T-cell (primary cell): ENCODE measurements at regions of chr11 and their contacts with region 1.

Region 1: DNA sequence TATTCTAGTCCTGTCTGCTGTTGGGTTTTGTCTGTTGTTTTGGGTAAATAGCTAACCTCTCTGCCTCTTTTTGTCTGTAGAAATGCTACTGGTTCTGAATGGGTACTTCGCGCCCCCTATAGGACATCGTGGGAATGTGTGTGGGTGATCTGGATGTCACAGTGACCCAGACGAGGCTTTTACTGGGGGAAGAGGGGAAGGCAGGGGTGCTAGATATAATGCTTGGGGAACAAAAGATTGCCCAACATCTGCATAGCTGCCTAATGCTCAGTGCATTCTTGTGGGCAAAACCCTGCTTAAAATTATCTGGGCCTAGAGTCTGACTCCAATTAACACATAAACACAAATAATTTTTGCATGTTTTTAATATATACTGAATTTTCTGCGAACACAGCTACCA is 57.7 kb downstream of the BMAL1 start:
- DNase-seq: peak; percentile 41 to 84 (median 63)
- ATAC-seq: peak; percentile 60 to 69 (median 66)
- H3K4me3 ChIP-seq: no peak overlapping the region
- H3K4me3 Mint-ChIP-seq: no peak overlapping the region
- H3K27ac ChIP-seq: no peak overlapping the region
- H3K27ac Mint-ChIP-seq: peak overlapping the region; percentile 0 to 1
- H3K4me1 ChIP-seq: peaks cover 0 to 61% of the 10 kb centered on the region in 2 experiments
- H3K4me1 Mint-ChIP-seq: peaks cover 84 to 90% (median 88%) of the 10 kb centered on the region in 3 donors
- H3K27me3 ChIP-seq: no peaks in the 10 kb centered on the region
- H3K27me3 Mint-ChIP-seq: no peaks in the 10 kb centered on the region

Region 2: GRCh38 chr11:12066799-12067508 is 1268.4 kb before region 1 on chr11:
- CTCF ChIA-PET with region 1: no interaction called
- POLR2A ChIA-PET with region 1: no interaction called
- DNase-seq: no peak
- ATAC-seq: no peak
- H3K4me3 ChIP-seq: no peak overlapping the region
- H3K4me3 Mint-ChIP-seq: no peak overlapping the region
- H3K27ac ChIP-seq: no peak overlapping the region
- H3K27ac Mint-ChIP-seq: peak overlapping the region in 1 of 2 donors; percentile 19
- H3K4me1 ChIP-seq: peaks cover 0 to 14% of the 10 kb centered on the region in 2 experiments
- H3K4me1 Mint-ChIP-seq: peaks cover 2 to 9% (median 4%) of the 10 kb centered on the region in 3 donors
- H3K27me3 ChIP-seq: peaks cover 0 to 6% of the 10 kb centered on the region in 2 experiments
- H3K27me3 Mint-ChIP-seq: peaks cover 0 to 6% of the 10 kb centered on the region in 2 donors

Region 3: GRCh38 chr11:12269104-12269441 is 1066.2 kb before region 1 on chr11:
- CTCF ChIA-PET with region 1: no interaction called
- POLR2A ChIA-PET with region 1: no interaction called
- DNase-seq: no peak
- ATAC-seq: no peak
- H3K4me3 ChIP-seq: no peak overlapping the region
- H3K4me3 Mint-ChIP-seq: no peak overlapping the region
- H3K27ac ChIP-seq: no peak overlapping the region
- H3K27ac Mint-ChIP-seq: no peak overlapping the region
- H3K4me1 ChIP-seq: no peaks in the 10 kb centered on the region
- H3K4me1 Mint-ChIP-seq: no peaks in the 10 kb centered on the region
- H3K27me3 ChIP-seq: no peaks in the 10 kb centered on the region
- H3K27me3 Mint-ChIP-seq: no peaks in the 10 kb centered on the region

Region 4: GRCh38 chr11:13214276-13214675 is 121.0 kb before region 1 on chr11:
- CTCF ChIA-PET with region 1: interaction called, 3 to 13 read pairs
- POLR2A ChIA-PET with region 1: no interaction called
- DNase-seq: no peak
- ATAC-seq: no peak
- H3K4me3 ChIP-seq: no peak overlapping the region
- H3K4me3 Mint-ChIP-seq: no peak overlapping the region
- H3K27ac ChIP-seq: no peak overlapping the region
- H3K27ac Mint-ChIP-seq: no peak overlapping the region
- H3K4me1 ChIP-seq: no peaks in the 10 kb centered on the region
- H3K4me1 Mint-ChIP-seq: peaks cover 0 to 12% (median 2%) of the 10 kb centered on the region in 3 donors
- H3K27me3 ChIP-seq: no peaks in the 10 kb centered on the region
- H3K27me3 Mint-ChIP-seq: no peaks in the 10 kb centered on the region

Region 5: GRCh38 chr11:13249996-13250395 is 85.3 kb before region 1 on chr11:
- CTCF ChIA-PET with region 1: interaction called, 3 to 26 read pairs
- POLR2A ChIA-PET with region 1: no interaction called
- DNase-seq: peak in 2 of 35 experiments; percentile 4 to 33
- ATAC-seq: no peak
- H3K4me3 ChIP-seq: no peak overlapping the region
- H3K4me3 Mint-ChIP-seq: no peak overlapping the region
- H3K27ac ChIP-seq: no peak overlapping the region
- H3K27ac Mint-ChIP-seq: no peak overlapping the region
- H3K4me1 ChIP-seq: no peaks in the 10 kb centered on the region
- H3K4me1 Mint-ChIP-seq: no peaks in the 10 kb centered on the region
- H3K27me3 ChIP-seq: no peaks in the 10 kb centered on the region
- H3K27me3 Mint-ChIP-seq: peaks cover 8 to 16% of the 10 kb centered on the region in 2 donors

Region 6: GRCh38 chr11:13440100-13440855 is 105.0 kb after region 1 on chr11:
- CTCF ChIA-PET with region 1: no interaction called
- POLR2A ChIA-PET with region 1: no interaction called
- DNase-seq: no peak
- ATAC-seq: no peak
- H3K4me3 ChIP-seq: no peak overlapping the region
- H3K4me3 Mint-ChIP-seq: no peak overlapping the region
- H3K27ac ChIP-seq: no peak overlapping the region
- H3K27ac Mint-ChIP-seq: no peak overlapping the region
- H3K4me1 ChIP-seq: no peaks in the 10 kb centered on the region
- H3K4me1 Mint-ChIP-seq: peaks cover 35 to 66% (median 62%) of the 10 kb centered on the region in 3 donors
- H3K27me3 ChIP-seq: no peaks in the 10 kb centered on the region
- H3K27me3 Mint-ChIP-seq: no peaks in the 10 kb centered on the region

Region 7: DNA sequence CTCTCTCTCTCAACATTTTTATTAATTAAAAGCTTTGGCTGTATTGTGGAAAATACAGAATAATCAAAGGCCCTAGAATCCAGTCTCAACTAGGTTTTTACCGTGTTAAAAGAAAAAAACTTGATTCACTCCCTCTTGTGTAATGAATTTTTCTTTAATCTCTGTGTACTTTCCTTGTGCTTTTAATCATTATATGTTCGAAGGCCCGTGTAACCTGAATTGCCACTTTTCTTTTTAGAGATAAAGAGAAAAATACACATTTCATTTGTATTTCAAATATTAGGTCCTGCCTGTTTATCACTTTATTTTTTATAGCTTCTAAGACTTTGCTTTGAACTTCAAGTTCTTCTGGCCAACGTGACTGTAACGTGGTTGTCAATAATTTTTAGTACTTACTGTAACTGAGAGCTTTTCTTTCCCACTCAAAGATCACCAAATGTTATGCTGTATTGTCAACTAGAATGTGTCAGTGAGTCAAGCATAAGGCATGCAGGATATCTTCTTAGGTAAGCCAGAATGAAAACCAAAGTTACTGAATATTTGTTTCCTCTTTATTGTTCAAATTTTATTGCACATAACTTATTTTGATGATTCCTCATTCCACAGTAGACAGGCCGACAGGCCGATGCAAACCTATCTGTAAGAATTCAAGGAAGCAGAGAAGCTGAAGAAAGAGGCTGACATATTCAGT is 309.8 kb after region 1 on chr11:
- CTCF ChIA-PET with region 1: no interaction called
- POLR2A ChIA-PET with region 1: no interaction called
- DNase-seq: no peak
- ATAC-seq: no peak
- H3K4me3 ChIP-seq: no peak overlapping the region
- H3K4me3 Mint-ChIP-seq: no peak overlapping the region
- H3K27ac ChIP-seq: no peak overlapping the region
- H3K27ac Mint-ChIP-seq: no peak overlapping the region
- H3K4me1 ChIP-seq: no peaks in the 10 kb centered on the region
- H3K4me1 Mint-ChIP-seq: no peaks in the 10 kb centered on the region
- H3K27me3 ChIP-seq: peaks cover 0 to 3% of the 10 kb centered on the region in 2 experiments
- H3K27me3 Mint-ChIP-seq: peaks cover 20% of the 10 kb centered on the region in 2 donors